Ascending aorta (tissue), 2 donors: ENCODE measurements at regions of chr10 and their contacts with region 1.

Region 1: GRCh38 chr10:12888470-12888869 is 113.0 kb downstream of the CCDC3 start:
- DNase-seq: peak in 1 of 2 donors; percentile 72
- H3K4me3 ChIP-seq: no peak overlapping the region
- H3K27ac ChIP-seq: peak overlapping the region; percentile 80 to 89
- H3K4me1 ChIP-seq: peaks cover 9 to 17% of the 10 kb centered on the region in 2 donors
- H3K27me3 ChIP-seq: no peaks in the 10 kb centered on the region
- CTCF ChIP-seq: no peak

Region 2: GRCh38 chr10:12844811-12845533 is 43.5 kb before region 1 on chr10:
- intact Hi-C with region 1: loop called (anchors 5 kb)
- DNase-seq: peak in 1 of 2 donors; percentile 77
- H3K4me3 ChIP-seq: peak overlapping the region in 1 of 2 donors; percentile 26
- H3K27ac ChIP-seq: peak overlapping the region; percentile 49 to 73
- H3K4me1 ChIP-seq: peaks cover 2 to 22% of the 10 kb centered on the region in 2 donors
- H3K27me3 ChIP-seq: no peaks in the 10 kb centered on the region
- CTCF ChIP-seq: no peak

Region 3: DNA sequence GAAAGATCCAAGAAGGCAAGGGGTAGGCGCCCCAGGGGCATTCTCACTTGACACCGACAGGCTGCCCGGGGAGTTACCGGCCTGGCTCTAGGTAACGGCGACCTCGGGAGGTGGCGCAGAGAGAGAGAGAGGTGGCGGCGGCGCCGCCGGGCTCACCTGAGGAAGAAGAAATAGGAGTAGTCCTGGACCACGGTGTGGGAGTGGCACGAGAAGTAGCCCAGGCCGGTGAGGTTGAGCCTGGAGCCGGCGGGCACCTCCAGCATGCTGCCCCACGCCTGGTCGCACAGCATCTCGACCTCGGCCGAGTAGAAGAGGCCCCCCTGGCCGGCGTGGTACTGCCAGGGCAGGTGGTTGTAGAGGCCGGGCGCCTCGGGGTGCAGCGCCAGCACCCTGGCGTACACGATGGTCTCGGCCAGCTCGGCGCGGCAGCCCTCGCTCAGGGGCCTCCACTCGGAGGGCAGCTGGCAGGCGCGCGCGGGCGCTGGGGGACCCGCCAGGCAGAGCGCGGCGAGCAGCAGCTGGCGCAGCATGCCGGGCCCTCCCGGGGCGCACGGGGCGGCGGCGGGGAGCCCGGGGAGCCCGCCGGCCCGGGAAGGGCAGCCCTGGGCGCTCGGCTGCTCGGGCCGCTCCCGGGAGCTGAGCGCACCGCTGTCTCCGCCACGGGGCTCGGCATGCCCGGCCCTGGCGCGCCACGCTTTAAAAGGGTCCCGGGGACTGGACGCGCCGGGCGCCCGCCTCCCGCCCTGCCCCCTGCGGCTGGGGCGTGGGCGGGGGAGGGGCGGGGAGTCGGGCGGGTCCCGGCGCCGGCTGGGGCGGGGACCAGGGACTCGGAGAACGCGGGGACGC is 112.8 kb after region 1 on chr10 and contains the start of gene CCDC3:
- intact Hi-C with region 1: loop called (anchors 1 kb)
- DNase-seq: peak in 1 of 2 donors; percentile 67
- H3K4me3 ChIP-seq: peak within 1 kb of the TSS; percentile 68 to 75
- H3K27ac ChIP-seq: peak within 1 kb of the TSS; percentile 70 to 81
- H3K4me1 ChIP-seq: peaks cover 2 to 12% of the 10 kb centered on the region in 2 donors
- H3K27me3 ChIP-seq: no peaks in the 10 kb centered on the region
- CTCF ChIP-seq: no peak
- total RNA-seq, gene CCDC3: 86.0 TPM

Region 4: GRCh38 chr10:14459665-14460064 is 1571.2 kb after region 1 on chr10:
- intact Hi-C with region 1: no loop called
- DNase-seq: peak in 1 of 2 donors; percentile 11
- H3K4me3 ChIP-seq: no peak overlapping the region
- H3K27ac ChIP-seq: no peak overlapping the region
- H3K4me1 ChIP-seq: peaks cover 0 to 3% of the 10 kb centered on the region in 2 donors
- H3K27me3 ChIP-seq: no peaks in the 10 kb centered on the region
- CTCF ChIP-seq: no peak